ENCODE measurements at regions of chr17 and their contacts with region 1.

Region 1: GRCh38 chr17:63842540-63843386 is at the start of gene SMARCD2:
- DNase-seq: peak; percentile 99
- ATAC-seq: peak; percentile 91
- H3K4me3 ChIP-seq: peak within 1 kb of the TSS; percentile 86 to 95
- H3K4me3 Mint-ChIP-seq: peak within 1 kb of the TSS; percentile 92
- H3K27ac ChIP-seq: peak within 1 kb of the TSS; percentile 88 to 95
- H3K27ac Mint-ChIP-seq: peak within 1 kb of the TSS; percentile 92
- H3K4me1 ChIP-seq: peaks cover 43% of the 10 kb centered on the region
- H3K4me1 Mint-ChIP-seq: peaks cover 30% of the 10 kb centered on the region
- H3K27me3 ChIP-seq: no peaks in the 10 kb centered on the region
- H3K27me3 Mint-ChIP-seq: no peaks in the 10 kb centered on the region
- CTCF ChIP-seq: no peak
- total RNA-seq, gene SMARCD2: 121 TPM

Region 2: DNA sequence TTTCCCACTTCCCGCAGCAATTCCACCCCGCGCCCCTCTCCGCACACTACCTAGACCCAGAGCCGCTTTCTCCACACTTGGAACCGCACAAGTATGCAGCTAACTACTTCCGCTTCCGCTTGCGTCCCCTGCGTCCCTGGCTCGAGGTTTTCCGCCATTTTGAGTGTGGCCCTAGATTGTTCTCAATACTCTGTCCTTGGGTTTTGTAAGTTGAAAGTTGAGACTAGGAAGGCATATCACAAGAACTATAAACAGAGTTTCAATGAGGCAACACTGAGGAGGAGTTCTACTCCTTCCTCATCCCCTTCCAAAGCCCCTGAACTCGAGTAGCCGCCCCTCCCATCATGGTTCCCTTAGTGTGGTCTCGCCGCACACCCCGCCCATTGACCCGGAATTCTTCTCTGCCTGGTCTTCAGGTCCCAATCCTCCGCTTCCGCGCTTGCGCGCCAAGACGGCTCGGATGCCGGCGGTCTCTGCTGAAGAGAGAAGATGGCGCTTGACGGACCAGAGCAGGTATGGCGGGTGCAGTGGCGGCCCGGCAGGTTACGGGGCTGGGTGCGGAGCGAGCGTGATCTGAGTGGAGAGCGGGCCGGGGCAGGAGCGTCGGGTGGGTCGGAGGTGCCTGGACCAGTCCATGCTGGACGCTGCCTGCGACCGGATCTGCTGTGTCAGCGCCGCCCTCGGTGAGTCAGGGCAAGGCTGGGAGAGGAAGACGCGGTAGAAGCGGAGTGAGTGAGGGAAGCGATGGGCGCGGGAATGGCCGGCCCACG is 15.6 kb before region 1 on chr17 and contains the starts of genes FTSJ3 and PSMC5:
- CTCF ChIA-PET with region 1: interaction called, 11 read pairs
- POLR2A ChIA-PET with region 1: interaction called, 75 read pairs
- intact Hi-C with region 1: loop called (anchors 1 kb)
- DNase-seq: peak; percentile 91 to 99 (median 95)
- ATAC-seq: peak; percentile 92
- H3K4me3 ChIP-seq: peak within 1 kb of the TSS; percentile 74 to 75
- H3K4me3 Mint-ChIP-seq: peak within 1 kb of the TSS; percentile 100
- H3K27ac ChIP-seq: peak within 1 kb of the TSS; percentile 66 to 96
- H3K27ac Mint-ChIP-seq: peak within 1 kb of the TSS; percentile 98
- H3K4me1 ChIP-seq: peaks cover 56% of the 10 kb centered on the region
- H3K4me1 Mint-ChIP-seq: peaks cover 81% of the 10 kb centered on the region
- H3K27me3 ChIP-seq: no peaks in the 10 kb centered on the region
- H3K27me3 Mint-ChIP-seq: no peaks in the 10 kb centered on the region
- CTCF ChIP-seq: peak; percentile 51
- total RNA-seq, gene FTSJ3: 60.0 to 70.3 TPM
- total RNA-seq, gene PSMC5: 88.5 to 90.3 TPM

Region 3: GRCh38 chr17:64216338-64217248 is 373.8 kb after region 1 on chr17:
- CTCF ChIA-PET with region 1: no interaction called
- POLR2A ChIA-PET with region 1: no interaction called
- intact Hi-C with region 1: no loop called
- DNase-seq: peak in 1 of 9 experiments; percentile 27
- ATAC-seq: no peak
- H3K4me3 ChIP-seq: no peak overlapping the region
- H3K4me3 Mint-ChIP-seq: no peak overlapping the region
- H3K27ac ChIP-seq: no peak overlapping the region
- H3K27ac Mint-ChIP-seq: peak overlapping the region; percentile 19
- H3K4me1 ChIP-seq: peaks cover 20% of the 10 kb centered on the region
- H3K4me1 Mint-ChIP-seq: peaks cover 26% of the 10 kb centered on the region
- H3K27me3 ChIP-seq: no peaks in the 10 kb centered on the region
- H3K27me3 Mint-ChIP-seq: no peaks in the 10 kb centered on the region
- CTCF ChIP-seq: no peak